Gastrocnemius medialis (tissue), 4 donors: ENCODE measurements at regions of chr11 and their contacts with region 1.

Region 1: GRCh38 chr11:121249039-121249663 is 43.4 kb upstream of the SC5D start:
- DNase-seq: no peak
- ATAC-seq: peak; percentile 65 to 70
- H3K4me3 ChIP-seq: peak overlapping the region in 1 of 4 donors; percentile 27
- H3K27ac ChIP-seq: no peak overlapping the region
- H3K4me1 ChIP-seq: no peaks in the 10 kb centered on the region
- H3K27me3 ChIP-seq: no peaks in the 10 kb centered on the region
- CTCF ChIP-seq: peak; percentile 24 to 76 (median 66)
- POLR2A ChIP-seq: no peak

Region 2: DNA sequence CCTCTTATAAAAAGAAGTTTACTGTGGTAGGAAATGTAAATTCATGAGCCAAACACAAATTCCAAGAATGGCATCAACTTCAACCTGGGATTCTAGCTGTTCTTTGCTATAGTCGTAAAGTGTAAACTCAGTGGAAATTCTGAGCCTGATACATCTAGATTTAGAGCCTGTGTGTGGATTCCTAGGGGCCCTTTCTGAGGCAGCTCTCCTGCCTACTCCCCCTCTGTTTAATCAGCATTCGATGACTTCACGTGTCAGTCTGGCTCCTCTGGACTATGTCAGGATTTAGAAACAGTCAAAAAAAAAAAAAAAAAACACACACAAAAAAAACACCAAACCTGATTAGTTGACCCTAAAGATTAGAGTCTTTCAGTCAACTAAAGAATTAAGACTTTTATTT is 49.6 kb before region 1 on chr11:
- in situ Hi-C with region 1: no loop called
- intact Hi-C with region 1: no loop called
- DNase-seq: no peak
- ATAC-seq: no peak
- H3K4me3 ChIP-seq: no peak overlapping the region
- H3K27ac ChIP-seq: no peak overlapping the region
- H3K4me1 ChIP-seq: no peaks in the 10 kb centered on the region
- H3K27me3 ChIP-seq: peaks cover 0 to 3% (median 0%) of the 10 kb centered on the region in 3 donors
- CTCF ChIP-seq: no peak
- POLR2A ChIP-seq: no peak

Region 3: DNA sequence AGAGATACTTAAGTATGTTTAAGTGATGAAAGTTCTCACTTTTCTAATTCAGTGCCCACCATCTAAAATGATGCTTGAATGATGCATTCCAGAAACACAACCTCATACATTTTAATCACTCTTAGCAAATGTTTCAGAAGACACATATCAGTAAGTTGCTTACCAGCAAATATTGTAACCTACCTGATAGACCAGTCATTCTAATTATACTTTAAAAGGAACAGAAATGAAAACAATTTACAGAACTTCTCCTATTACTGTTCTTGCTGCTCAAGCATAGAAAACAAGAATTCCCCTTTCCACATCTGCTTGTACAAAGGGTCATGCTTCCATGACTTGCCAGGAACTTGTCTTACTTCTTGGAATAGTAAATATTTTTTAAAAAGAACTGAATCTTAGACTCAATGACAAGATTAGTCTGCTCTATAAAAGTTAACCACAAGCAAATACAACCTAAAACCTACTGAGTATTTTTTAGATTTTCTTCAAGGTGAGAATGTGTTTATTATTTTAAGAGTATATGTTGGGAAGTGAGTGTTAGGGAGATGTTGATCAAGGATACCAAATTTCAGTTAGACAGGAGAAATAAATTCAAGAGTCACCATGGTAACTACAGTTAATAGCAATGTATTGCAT is 38.6 kb before region 1 on chr11:
- in situ Hi-C with region 1: no loop called
- intact Hi-C with region 1: no loop called
- DNase-seq: no peak
- ATAC-seq: no peak
- H3K4me3 ChIP-seq: no peak overlapping the region
- H3K27ac ChIP-seq: no peak overlapping the region
- H3K4me1 ChIP-seq: no peaks in the 10 kb centered on the region
- H3K27me3 ChIP-seq: peaks cover 0 to 2% (median 0%) of the 10 kb centered on the region in 3 donors
- CTCF ChIP-seq: no peak
- POLR2A ChIP-seq: no peak

Region 4: DNA sequence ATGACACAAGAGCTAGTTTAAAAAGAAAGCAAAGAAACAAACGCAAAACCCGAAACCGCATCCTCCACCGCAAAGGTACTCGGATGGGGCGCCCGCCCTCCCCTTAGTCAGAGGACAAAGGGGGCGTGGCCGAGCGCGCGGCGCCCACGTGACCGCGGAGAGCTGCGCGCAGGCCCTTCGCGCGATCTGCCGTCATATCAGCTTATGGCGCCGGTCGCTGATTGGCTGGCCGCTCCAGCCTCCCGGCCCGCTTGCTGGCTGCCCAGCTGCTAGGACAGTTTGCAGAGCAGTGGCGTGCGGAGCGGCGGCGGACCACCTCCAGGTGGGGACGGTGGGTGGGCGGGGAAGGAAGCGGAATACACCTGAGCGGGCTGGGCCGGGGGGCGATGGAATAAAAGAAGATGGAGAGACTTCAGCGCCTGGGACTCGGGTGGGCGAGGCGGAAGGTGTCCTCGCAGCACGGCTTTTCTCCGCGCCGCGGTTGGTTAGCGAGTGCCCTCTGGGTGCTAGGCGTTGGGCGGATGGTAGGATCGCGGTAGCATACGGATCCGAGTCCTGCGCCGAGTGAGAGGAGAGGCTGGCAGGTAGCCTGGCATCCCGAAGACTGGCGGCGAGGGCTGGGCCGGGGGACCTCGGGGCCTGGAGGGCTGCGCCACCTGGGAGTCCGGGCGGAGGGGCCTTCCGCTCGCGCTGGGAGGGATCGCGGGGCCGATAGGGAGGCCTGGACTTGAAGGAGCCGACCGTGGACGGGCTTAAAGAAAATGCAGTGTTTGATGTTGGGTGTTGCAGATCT is 43.5 kb after region 1 on chr11 and contains the start of gene SC5D:
- in situ Hi-C with region 1: no loop called
- intact Hi-C with region 1: loop called (anchors 2 kb)
- DNase-seq: peak; percentile 89 to 91
- ATAC-seq: peak; percentile 98 to 99
- H3K4me3 ChIP-seq: peak within 1 kb of the TSS; percentile 68 to 95 (median 88)
- H3K27ac ChIP-seq: peak within 1 kb of the TSS; percentile 77 to 86 (median 82)
- H3K4me1 ChIP-seq: peaks cover 10 to 11% of the 10 kb centered on the region in 2 donors
- H3K27me3 ChIP-seq: no peaks in the 10 kb centered on the region
- CTCF ChIP-seq: peak in 1 of 5 experiments; percentile 6
- POLR2A ChIP-seq: peak; percentile 73 to 90
- total RNA-seq, gene SC5D: 5.7 to 11.5 (median 6.5) TPM